Ascending aorta (tissue), 2 donors: ENCODE measurements at regions of chr4 and their contacts with region 1.

Region 1: GRCh38 chr4:109815151-109816081 is at the start of gene GAR1:
- DNase-seq: peak; percentile 57 to 93
- H3K4me3 ChIP-seq: peak within 1 kb of the TSS; percentile 68 to 80
- H3K27ac ChIP-seq: peak within 1 kb of the TSS; percentile 66 to 87
- H3K4me1 ChIP-seq: peaks cover 6% of the 10 kb centered on the region in 2 donors
- H3K27me3 ChIP-seq: no peaks in the 10 kb centered on the region
- CTCF ChIP-seq: no peak
- total RNA-seq, gene GAR1: not detected

Region 2: GRCh38 chr4:108650212-108651013 is 1165.0 kb before region 1 on chr4 and contains the start of gene OSTC:
- intact Hi-C with region 1: loop called (anchors 5 kb)
- DNase-seq: peak; percentile 75 to 97
- H3K4me3 ChIP-seq: peak within 1 kb of the TSS; percentile 52 to 95
- H3K27ac ChIP-seq: peak within 1 kb of the TSS; percentile 81 to 82
- H3K4me1 ChIP-seq: peaks cover 0 to 9% of the 10 kb centered on the region in 2 donors
- H3K27me3 ChIP-seq: no peaks in the 10 kb centered on the region
- CTCF ChIP-seq: peak in 2 of 3 experiments; percentile 21 to 36
- total RNA-seq, gene OSTC: 50.4 TPM

Region 3: GRCh38 chr4:109559983-109560686 is 255.3 kb before region 1 on chr4 and contains the start of gene MCUB:
- intact Hi-C with region 1: loop called (anchors 10 kb)
- DNase-seq: peak; percentile 52 to 91
- H3K4me3 ChIP-seq: peak within 1 kb of the TSS; percentile 66 to 93
- H3K27ac ChIP-seq: peak within 1 kb of the TSS; percentile 76 to 79
- H3K4me1 ChIP-seq: peaks cover 0 to 3% of the 10 kb centered on the region in 2 donors
- H3K27me3 ChIP-seq: no peaks in the 10 kb centered on the region
- CTCF ChIP-seq: no peak
- total RNA-seq, gene MCUB: 430 TPM

Region 4: DNA sequence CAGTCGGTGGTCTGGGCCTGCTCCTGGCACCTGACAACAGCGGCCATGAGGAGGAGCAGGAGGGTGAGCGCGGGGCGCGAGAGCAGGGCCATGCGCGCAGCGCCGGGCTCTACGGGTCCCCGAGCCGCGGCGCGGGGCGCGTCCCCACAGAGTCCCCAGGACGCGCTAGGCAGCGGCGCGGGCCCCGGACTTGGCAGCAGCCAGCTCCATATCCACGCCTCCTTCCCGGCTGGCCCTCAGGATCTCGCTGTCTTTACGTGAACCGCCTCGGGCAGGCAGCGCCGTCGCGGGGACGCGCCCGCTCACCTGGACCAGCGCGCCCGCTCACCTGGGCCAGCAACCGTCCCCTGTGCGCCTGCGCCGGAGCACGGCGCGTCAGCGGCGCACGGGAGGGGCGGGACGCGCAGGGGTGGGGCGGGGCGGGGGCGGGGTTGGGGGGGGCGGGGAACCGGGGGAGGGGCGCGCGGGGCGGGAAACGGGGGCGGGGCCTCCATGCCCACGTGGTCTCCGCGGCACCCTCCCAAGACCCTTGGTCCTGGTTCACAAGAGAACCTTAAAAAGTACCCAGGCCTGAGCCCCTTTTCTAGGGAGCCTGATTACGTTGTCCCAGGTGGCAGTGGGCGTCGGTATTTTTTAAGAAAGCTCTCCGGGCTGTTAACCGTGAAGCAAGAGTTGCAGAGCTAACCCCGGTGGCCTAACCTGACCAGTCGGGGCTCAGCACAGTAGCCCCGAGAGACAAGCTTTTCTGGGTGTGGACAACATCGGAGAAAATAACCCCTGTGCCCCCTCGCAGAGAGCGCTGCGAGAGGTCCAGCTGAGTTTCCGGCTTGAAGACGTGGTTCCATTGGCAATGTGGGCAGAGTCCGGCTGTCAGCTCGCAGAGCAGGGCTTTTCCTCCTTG is 85.4 kb before region 1 on chr4 and contains the start of gene PLA2G12A:
- intact Hi-C with region 1: loop called (anchors 2 kb)
- DNase-seq: peak; percentile 9 to 79
- H3K4me3 ChIP-seq: peak within 1 kb of the TSS; percentile 86 to 88
- H3K27ac ChIP-seq: peak within 1 kb of the TSS; percentile 70 to 71
- H3K4me1 ChIP-seq: peaks cover 0 to 6% of the 10 kb centered on the region in 2 donors
- H3K27me3 ChIP-seq: no peaks in the 10 kb centered on the region
- CTCF ChIP-seq: no peak
- total RNA-seq, gene PLA2G12A: 8.9 TPM

Region 5: DNA sequence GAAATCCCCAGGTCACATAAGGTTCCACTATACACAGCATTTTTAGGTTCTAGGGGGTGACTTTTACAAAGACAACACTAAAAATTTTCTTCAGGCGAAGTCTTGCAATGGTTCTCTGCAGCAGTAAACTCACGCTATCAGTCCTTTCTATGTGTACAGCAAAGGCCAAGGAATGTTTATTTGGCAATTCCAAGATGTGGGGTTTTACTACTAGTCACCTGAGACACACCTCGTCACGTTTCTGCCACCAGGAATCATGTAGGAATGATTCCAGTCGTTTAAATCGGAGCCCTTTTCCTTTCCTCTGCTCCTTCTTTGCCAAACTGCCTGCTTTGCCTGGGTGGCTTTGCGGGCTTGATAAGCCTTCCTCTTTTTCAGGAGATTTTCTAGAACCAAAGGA is 584.7 kb after region 1 on chr4:
- intact Hi-C with region 1: no loop called
- DNase-seq: no peak
- H3K4me3 ChIP-seq: no peak overlapping the region
- H3K27ac ChIP-seq: no peak overlapping the region
- H3K4me1 ChIP-seq: no peaks in the 10 kb centered on the region
- H3K27me3 ChIP-seq: no peaks in the 10 kb centered on the region
- CTCF ChIP-seq: no peak